ENCODE measurements at regions of chr10 and their contacts with region 1.

Region 1: DNA sequence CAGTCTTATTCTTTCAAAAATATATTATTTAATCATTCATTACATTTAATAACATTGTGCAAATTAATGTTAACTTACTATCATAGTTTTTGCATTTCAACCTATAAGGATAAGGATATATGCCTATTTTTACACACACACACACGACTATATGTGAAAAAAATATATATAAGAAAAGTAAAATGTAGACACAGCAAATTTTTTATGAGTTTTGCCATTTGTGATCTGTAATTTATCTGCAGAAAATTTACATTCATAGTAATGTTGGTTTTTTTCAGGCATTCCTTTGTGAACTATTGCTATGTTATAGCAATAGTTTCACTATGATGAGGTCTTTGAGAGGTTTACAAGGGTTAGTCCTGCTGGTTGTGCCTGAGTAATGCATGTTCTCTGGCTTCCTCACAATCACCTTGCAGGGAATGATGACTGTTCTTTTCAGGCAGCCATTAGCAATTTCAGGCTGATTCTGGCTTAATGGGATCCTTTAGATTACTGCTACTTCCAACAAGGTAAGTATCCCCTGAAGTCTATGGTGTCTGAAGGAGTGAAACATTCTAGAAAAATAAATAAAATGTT is 183.7 kb upstream of the CDK1 start:
- DNase-seq: no peak
- H3K4me3 Mint-ChIP-seq: no peak overlapping the region
- H3K27ac Mint-ChIP-seq: no peak overlapping the region
- H3K4me1 Mint-ChIP-seq: peaks cover 20% of the 10 kb centered on the region
- H3K27me3 Mint-ChIP-seq: no peaks in the 10 kb centered on the region

Region 2: GRCh38 chr10:60572511-60573194 is 21.9 kb before region 1 on chr10:
- CTCF ChIA-PET with region 1: no interaction called
- POLR2A ChIA-PET with region 1: no interaction called
- intact Hi-C with region 1: loop called (anchors 1 kb)
- DNase-seq: peak; percentile 51
- H3K4me3 Mint-ChIP-seq: peak overlapping the region; percentile 83
- H3K27ac Mint-ChIP-seq: peak overlapping the region; percentile 87
- H3K4me1 Mint-ChIP-seq: peaks cover 54% of the 10 kb centered on the region
- H3K27me3 Mint-ChIP-seq: no peaks in the 10 kb centered on the region

Region 3: GRCh38 chr10:60731134-60731885 is 136.7 kb after region 1 on chr10:
- CTCF ChIA-PET with region 1: no interaction called
- POLR2A ChIA-PET with region 1: no interaction called
- intact Hi-C with region 1: no loop called
- DNase-seq: peak; percentile 49
- H3K4me3 Mint-ChIP-seq: peak overlapping the region; percentile 86
- H3K27ac Mint-ChIP-seq: peak overlapping the region; percentile 66
- H3K4me1 Mint-ChIP-seq: peaks cover 44% of the 10 kb centered on the region
- H3K27me3 Mint-ChIP-seq: peaks cover 2% of the 10 kb centered on the region